ENCODE measurements at regions of chr1 and their contacts with region 1.

Region 1: DNA sequence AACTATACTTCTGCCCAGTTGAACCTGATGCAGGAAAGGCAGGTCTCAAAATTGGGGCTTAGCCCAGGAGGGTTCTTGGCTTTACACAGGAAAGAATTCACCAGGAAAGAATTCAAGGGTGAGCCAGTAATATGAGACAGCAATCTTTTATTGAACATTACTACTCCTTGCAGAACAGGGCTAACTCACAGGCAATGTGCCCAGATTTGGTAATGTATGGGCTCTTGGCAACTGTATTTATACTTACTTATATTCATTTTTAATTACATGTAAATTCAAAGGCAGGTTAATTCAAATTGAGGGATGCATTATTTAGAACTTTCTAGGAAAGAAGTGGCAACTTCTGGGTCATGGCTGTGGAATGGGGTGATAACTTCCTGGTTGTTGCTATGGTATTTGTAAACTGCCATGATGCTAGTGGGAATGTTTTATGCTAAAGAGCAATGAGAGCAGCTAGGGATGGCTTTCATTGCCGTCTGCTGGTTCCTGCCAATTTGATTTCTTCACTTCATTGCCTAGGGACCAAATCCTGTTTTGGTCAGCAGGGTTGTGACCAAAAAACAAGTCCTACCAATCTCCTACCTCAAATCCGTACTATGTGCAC is 107.5 kb downstream of the CHRM3 start:
- H3K4me3 Mint-ChIP-seq: no peak overlapping the region
- H3K27ac Mint-ChIP-seq: no peak overlapping the region
- H3K4me1 Mint-ChIP-seq: no peaks in the 10 kb centered on the region
- H3K27me3 Mint-ChIP-seq: no peaks in the 10 kb centered on the region

Region 2: GRCh38 chr1:239478069-239478468 is 15.8 kb before region 1 on chr1:
- intact Hi-C with region 1: loop called (anchors 1 kb)
- H3K4me3 Mint-ChIP-seq: no peak overlapping the region
- H3K27ac Mint-ChIP-seq: no peak overlapping the region
- H3K4me1 Mint-ChIP-seq: no peaks in the 10 kb centered on the region
- H3K27me3 Mint-ChIP-seq: no peaks in the 10 kb centered on the region

Measured in dendritic cell treated with granulocyte-macrophage colony-stimulating factor and Interleukin-4, amounts not matched to agents 40 ng/mL and 50 ng/mL, for 4 days (primary cell).